Activated naive CD8-positive, alpha-beta T cell treated with anti-CD3 and anti-CD28 coated beads, Interleukin-2, amount 10 ng/mL, durations not matched to agents 7 days and 5 days (primary cell): ENCODE measurements at regions of chr4 and their contacts with region 1.

Region 1: DNA sequence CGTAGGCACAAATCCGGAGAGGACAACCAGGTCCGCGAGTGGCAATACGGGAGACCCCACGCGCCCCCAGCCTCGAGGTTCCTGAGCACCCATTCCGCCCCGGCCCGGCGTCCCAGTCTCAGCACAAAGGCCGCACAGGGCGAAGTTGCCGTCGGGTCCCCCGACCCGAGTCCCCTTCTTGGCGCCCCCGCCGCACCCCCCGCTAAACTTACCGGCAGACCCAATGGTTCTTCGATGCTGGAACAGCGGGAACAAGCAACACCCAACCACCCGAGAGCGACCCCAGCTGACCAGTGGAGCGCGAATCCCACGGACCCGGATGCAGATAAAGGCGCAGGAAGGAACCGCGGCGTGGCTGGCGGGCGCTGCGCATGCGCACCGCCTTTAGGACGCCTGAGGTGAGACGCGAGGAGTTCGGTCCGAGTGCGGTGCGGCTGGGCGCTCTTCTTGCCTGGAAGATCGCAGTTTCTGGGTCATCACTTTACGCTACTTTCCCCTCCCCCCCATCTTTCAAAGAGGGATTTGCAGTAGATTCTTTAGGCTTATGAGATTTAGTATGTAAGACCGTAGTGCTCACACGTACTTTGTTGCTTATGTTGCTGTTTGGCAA is at the start of gene GNPDA2:
- DNase-seq: peak; percentile 82
- ATAC-seq: peak; percentile 94
- H3K4me3 Mint-ChIP-seq: peak within 1 kb of the TSS; percentile 90
- H3K27ac Mint-ChIP-seq: peak within 1 kb of the TSS; percentile 89
- H3K4me1 Mint-ChIP-seq: peaks cover 30% of the 10 kb centered on the region
- H3K27me3 Mint-ChIP-seq: peaks cover 1% of the 10 kb centered on the region
- total RNA-seq, gene GNPDA2: 11.2 to 13.5 TPM

Region 2: DNA sequence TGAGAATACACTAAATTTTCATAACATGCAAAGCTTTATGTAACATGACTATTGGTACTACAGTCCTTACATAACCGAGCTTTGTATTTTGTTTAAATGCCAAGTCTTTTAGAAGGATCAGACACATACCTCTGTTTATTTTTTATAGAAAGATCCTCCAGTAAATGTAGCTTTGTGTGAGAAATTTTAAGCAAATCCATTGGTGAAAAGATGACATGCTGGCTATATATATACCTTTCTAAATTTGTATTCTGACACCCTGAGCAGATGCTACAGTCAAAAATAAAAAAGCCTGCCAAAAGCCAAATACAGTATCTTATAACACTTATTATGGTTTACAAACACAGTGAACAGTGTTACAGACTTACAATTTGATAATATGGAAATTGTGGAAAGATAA is 74.9 kb before region 1 on chr4 and contains the start of gene YIPF7:
- POLR2A ChIA-PET with region 1: no interaction called
- DNase-seq: no peak
- ATAC-seq: no peak
- H3K4me3 Mint-ChIP-seq: no peak within 1 kb of the TSS
- H3K27ac Mint-ChIP-seq: no peak within 1 kb of the TSS
- H3K4me1 Mint-ChIP-seq: no peaks in the 10 kb centered on the region
- H3K27me3 Mint-ChIP-seq: peaks cover 6% of the 10 kb centered on the region
- total RNA-seq, gene YIPF7: not detected

Region 3: GRCh38 chr4:44678094-44679041 is 48.0 kb before region 1 on chr4 and contains the start of gene GUF1:
- POLR2A ChIA-PET with region 1: interaction called, 19 read pairs
- DNase-seq: peak; percentile 89
- ATAC-seq: peak; percentile 90
- H3K4me3 Mint-ChIP-seq: peak within 1 kb of the TSS; percentile 93
- H3K27ac Mint-ChIP-seq: peak within 1 kb of the TSS; percentile 94
- H3K4me1 Mint-ChIP-seq: peaks cover 26% of the 10 kb centered on the region
- H3K27me3 Mint-ChIP-seq: no peaks in the 10 kb centered on the region
- total RNA-seq, gene GUF1: 24.3 to 25.5 TPM

Region 4: GRCh38 chr4:45007508-45007907 is 281.1 kb after region 1 on chr4:
- POLR2A ChIA-PET with region 1: no interaction called
- DNase-seq: no peak
- ATAC-seq: no peak
- H3K4me3 Mint-ChIP-seq: no peak overlapping the region
- H3K27ac Mint-ChIP-seq: no peak overlapping the region
- H3K4me1 Mint-ChIP-seq: no peaks in the 10 kb centered on the region
- H3K27me3 Mint-ChIP-seq: no peaks in the 10 kb centered on the region